B cell (primary cell): ENCODE measurements at regions of chr5 and their contacts with region 1.

Region 1: GRCh38 chr5:39948867-39949468 is 524.2 kb upstream of the DAB2 start:
- DNase-seq: peak; percentile 82
- ATAC-seq: peak; percentile 80
- H3K4me3 ChIP-seq: no peak overlapping the region
- H3K4me3 Mint-ChIP-seq: no peak overlapping the region
- H3K27ac ChIP-seq: no peak overlapping the region
- H3K27ac Mint-ChIP-seq: no peak overlapping the region
- H3K4me1 ChIP-seq: no peaks in the 10 kb centered on the region
- H3K4me1 Mint-ChIP-seq: peaks cover 2% of the 10 kb centered on the region
- H3K27me3 ChIP-seq: no peaks in the 10 kb centered on the region
- H3K27me3 Mint-ChIP-seq: no peaks in the 10 kb centered on the region
- CTCF ChIP-seq: peak; percentile 81

Region 2: DNA sequence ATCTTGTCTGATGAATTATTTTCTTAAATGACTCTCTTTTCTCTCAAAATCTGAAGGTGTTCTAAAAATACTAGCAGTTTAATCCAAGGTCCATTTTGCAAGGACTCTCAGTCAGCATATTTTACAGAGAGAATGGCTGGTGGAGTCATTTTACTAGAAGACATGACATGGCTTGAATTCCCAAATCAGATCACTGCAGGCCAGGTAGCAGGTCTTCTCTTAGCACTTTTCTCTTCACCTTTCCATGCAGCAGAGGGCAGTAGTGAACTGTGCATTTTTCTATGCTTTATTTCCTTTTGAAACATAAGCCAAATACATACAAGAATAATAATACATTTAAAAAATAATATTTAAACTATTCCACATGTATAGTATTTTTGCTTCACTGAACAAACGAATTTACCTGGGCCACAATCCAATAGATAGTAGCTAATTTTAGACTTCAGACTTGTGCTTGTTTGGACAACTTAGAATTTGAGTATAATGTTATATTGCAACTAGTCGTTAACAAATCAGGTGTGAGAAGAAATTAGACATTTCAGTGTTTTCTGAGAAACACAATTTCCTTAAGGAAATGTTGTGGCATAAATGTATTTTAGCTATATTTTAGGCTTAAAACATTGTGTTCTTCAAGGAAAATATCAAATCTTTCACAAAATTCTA is 234.8 kb before region 1 on chr5:
- CTCF ChIA-PET with region 1: interaction called, 11 read pairs
- POLR2A ChIA-PET with region 1: no interaction called
- intact Hi-C with region 1: loop called (anchors 2 kb)
- DNase-seq: peak; percentile 55
- ATAC-seq: no peak
- H3K4me3 ChIP-seq: no peak overlapping the region
- H3K4me3 Mint-ChIP-seq: no peak overlapping the region
- H3K27ac ChIP-seq: no peak overlapping the region
- H3K27ac Mint-ChIP-seq: no peak overlapping the region
- H3K4me1 ChIP-seq: no peaks in the 10 kb centered on the region
- H3K4me1 Mint-ChIP-seq: no peaks in the 10 kb centered on the region
- H3K27me3 ChIP-seq: peaks cover 0 to 3% (median 0%) of the 10 kb centered on the region in 4 experiments
- H3K27me3 Mint-ChIP-seq: no peaks in the 10 kb centered on the region
- CTCF ChIP-seq: peak; percentile 73

Region 3: DNA sequence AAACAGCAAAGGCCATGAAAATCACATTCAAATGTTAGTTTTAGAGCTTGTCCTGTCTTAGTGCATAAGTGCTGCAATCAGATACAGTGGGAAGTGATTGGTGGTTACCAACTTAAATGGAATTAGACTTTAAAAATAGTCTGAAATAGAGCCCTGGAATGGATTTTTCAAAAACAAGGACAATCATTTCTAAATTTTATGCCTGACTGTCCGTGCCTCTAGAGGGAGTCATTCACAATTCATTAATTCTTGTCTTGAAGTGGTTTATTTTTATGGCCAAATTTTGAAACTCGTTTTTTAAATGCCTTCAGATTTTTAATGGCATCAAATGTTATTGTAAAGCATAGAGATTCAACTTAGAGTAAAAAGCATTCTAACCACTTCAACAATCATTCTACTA is 37.6 kb after region 1 on chr5:
- CTCF ChIA-PET with region 1: no interaction called
- POLR2A ChIA-PET with region 1: no interaction called
- intact Hi-C with region 1: no loop called
- DNase-seq: no peak
- ATAC-seq: no peak
- H3K4me3 ChIP-seq: no peak overlapping the region
- H3K4me3 Mint-ChIP-seq: no peak overlapping the region
- H3K27ac ChIP-seq: no peak overlapping the region
- H3K27ac Mint-ChIP-seq: no peak overlapping the region
- H3K4me1 ChIP-seq: no peaks in the 10 kb centered on the region
- H3K4me1 Mint-ChIP-seq: no peaks in the 10 kb centered on the region
- H3K27me3 ChIP-seq: no peaks in the 10 kb centered on the region
- H3K27me3 Mint-ChIP-seq: peaks cover 16% of the 10 kb centered on the region
- CTCF ChIP-seq: no peak

Region 4: GRCh38 chr5:40021007-40021406 is 72.0 kb after region 1 on chr5:
- CTCF ChIA-PET with region 1: interaction called, 9 read pairs
- POLR2A ChIA-PET with region 1: no interaction called
- intact Hi-C with region 1: loop called (anchors 5 kb)
- DNase-seq: peak; percentile 50
- ATAC-seq: peak; percentile 57
- H3K4me3 ChIP-seq: no peak overlapping the region
- H3K4me3 Mint-ChIP-seq: no peak overlapping the region
- H3K27ac ChIP-seq: no peak overlapping the region
- H3K27ac Mint-ChIP-seq: no peak overlapping the region
- H3K4me1 ChIP-seq: peaks cover 5 to 6% of the 10 kb centered on the region in 2 donors
- H3K4me1 Mint-ChIP-seq: peaks cover 20% of the 10 kb centered on the region
- H3K27me3 ChIP-seq: no peaks in the 10 kb centered on the region
- H3K27me3 Mint-ChIP-seq: no peaks in the 10 kb centered on the region
- CTCF ChIP-seq: peak; percentile 57

Region 5: DNA sequence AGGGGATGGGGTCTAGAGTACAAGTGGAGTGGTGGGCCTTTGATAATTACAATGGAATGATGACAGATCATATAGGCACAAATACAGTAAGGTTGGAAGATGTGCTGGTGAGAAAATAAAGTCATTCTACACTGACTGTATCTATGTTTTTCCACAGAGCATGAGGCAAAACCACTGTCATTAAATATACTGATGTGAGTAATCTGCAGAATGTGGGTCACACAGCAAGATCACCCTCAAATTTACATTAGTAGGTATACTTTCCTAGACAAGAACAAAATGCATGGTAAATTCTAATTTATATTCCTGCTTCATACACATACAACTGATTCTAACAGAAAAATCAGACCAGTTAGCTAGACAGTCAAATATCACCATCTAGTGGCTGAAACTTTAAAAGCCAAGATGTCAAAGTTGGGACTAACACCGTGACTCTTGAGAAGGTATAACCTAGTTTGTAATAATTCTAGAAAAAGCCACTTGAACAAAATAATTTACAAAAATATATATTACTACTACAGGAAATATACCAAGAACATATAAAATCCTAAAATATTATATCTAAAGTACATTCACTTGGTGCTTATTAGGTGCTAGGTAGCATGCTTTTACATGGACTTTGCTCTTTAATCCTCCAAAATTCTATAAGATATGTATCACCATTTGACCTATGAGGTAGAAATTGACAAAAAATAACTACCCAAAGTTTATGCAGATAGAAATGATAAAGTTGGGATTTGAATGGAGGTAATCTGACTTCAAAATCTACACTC is 787.3 kb after region 1 on chr5:
- CTCF ChIA-PET with region 1: interaction called, 28 read pairs
- POLR2A ChIA-PET with region 1: no interaction called
- intact Hi-C with region 1: loop called (anchors 1 kb)
- DNase-seq: peak; percentile 68
- ATAC-seq: no peak
- H3K4me3 ChIP-seq: no peak overlapping the region
- H3K4me3 Mint-ChIP-seq: no peak overlapping the region
- H3K27ac ChIP-seq: no peak overlapping the region
- H3K27ac Mint-ChIP-seq: no peak overlapping the region
- H3K4me1 ChIP-seq: no peaks in the 10 kb centered on the region
- H3K4me1 Mint-ChIP-seq: peaks cover 4% of the 10 kb centered on the region
- H3K27me3 ChIP-seq: no peaks in the 10 kb centered on the region
- H3K27me3 Mint-ChIP-seq: no peaks in the 10 kb centered on the region
- CTCF ChIP-seq: peak; percentile 93

Region 6: DNA sequence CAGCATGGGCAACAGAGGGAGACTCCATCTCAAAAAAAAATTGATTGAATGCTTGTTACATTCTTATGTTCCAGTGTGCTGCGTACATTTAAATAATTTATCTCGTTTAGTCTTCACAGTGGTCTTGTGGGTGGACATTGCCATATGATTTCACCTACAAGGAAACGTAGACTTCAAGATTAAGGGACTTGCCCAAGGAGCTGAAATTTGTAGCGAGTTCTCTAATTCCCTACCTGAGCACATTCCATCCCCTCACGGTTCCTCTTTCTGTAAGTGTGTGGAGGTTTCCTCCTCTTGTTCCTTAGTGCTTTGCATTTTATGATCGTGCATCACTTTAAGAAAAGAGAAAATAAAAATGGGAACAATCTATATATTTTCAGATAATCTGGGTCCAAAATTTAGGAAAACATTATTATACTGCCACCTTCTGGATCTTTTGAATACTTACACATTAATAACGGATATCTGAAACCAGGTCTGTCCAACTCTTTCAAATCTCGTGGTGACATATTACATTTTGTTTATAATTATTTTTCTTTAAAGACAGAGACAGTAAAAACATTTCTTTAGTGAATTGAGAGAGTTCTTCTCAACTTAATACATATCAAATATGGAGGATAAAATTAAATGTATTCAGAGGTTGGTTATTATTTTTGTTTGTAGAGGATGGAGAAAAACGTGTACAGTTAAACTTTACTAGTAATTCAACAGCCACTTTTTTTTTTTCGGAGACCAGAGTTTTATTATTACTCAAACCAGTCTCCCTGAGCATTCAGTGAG is 930.4 kb after region 1 on chr5:
- CTCF ChIA-PET with region 1: no interaction called
- POLR2A ChIA-PET with region 1: no interaction called
- intact Hi-C with region 1: loop called (anchors 1 kb)
- DNase-seq: peak; percentile 36
- ATAC-seq: peak; percentile 36
- H3K4me3 ChIP-seq: no peak overlapping the region
- H3K4me3 Mint-ChIP-seq: no peak overlapping the region
- H3K27ac ChIP-seq: no peak overlapping the region
- H3K27ac Mint-ChIP-seq: no peak overlapping the region
- H3K4me1 ChIP-seq: no peaks in the 10 kb centered on the region
- H3K4me1 Mint-ChIP-seq: no peaks in the 10 kb centered on the region
- H3K27me3 ChIP-seq: peaks cover 0 to 5% (median 0%) of the 10 kb centered on the region in 4 experiments
- H3K27me3 Mint-ChIP-seq: peaks cover 20% of the 10 kb centered on the region
- CTCF ChIP-seq: peak; percentile 83